Activated CD4-positive, alpha-beta T cell treated with anti-CD3 and anti-CD28 coated beads, Interleukin-2, amount 10 ng/mL, durations not matched to agents 24 days and 14 days (primary cell): ENCODE measurements at regions of chr20 and their contacts with region 1.

Region 1: GRCh38 chr20:25310268-25310920 is 62.5 kb downstream of the PYGB start:
- DNase-seq: peak; percentile 88
- H3K4me3 Mint-ChIP-seq: peak overlapping the region; percentile 85
- H3K27ac Mint-ChIP-seq: peak overlapping the region; percentile 98
- H3K4me1 Mint-ChIP-seq: peaks cover 31% of the 10 kb centered on the region
- H3K27me3 Mint-ChIP-seq: no peaks in the 10 kb centered on the region

Region 2: DNA sequence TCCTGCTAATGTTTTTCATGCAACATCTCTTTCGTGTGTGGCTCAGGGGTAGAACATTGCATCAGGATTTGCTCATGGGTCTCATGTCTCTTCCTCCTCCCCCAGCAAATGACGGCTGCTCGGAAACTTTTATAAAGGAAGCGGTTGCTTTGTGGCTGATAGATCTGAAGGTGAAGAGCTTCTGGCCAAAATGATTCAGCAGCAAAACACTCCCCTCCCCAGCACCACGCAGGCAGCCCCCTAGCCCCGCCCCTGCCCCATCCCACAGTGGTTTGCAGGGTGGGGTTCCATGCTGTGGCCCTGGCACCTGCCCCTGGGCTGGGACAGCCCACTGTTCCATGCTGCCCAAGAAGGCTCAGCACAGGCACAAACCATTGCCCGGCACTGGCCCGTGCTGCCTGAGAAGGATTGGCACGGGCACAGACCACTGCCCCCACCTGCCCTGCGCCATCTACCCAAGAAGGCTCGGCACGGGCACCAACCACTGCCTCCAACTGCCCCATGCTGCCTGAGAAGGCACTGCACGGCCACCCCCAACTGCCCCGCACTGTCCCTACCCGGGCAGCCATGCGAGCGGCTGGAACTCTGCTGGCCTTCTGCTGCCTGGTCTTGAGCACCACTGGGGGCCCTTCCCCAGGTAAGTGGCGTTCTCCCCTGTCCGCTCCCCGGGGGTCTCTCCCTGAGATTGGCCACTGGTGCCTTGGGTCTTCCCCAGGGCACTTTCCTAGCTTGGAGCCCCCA is 361.3 kb before region 1 on chr20 and contains the start of gene CST7:
- intact Hi-C with region 1: loop called (anchors 5 kb)
- DNase-seq: peak; percentile 95
- H3K4me3 Mint-ChIP-seq: peak within 1 kb of the TSS; percentile 95
- H3K27ac Mint-ChIP-seq: peak within 1 kb of the TSS; percentile 98
- H3K4me1 Mint-ChIP-seq: peaks cover 67% of the 10 kb centered on the region
- H3K27me3 Mint-ChIP-seq: no peaks in the 10 kb centered on the region
- total RNA-seq, gene CST7: 115 and 117 TPM in 2 replicates

Region 3: GRCh38 chr20:25044660-25045342 is 265.6 kb before region 1 on chr20:
- intact Hi-C with region 1: no loop called
- DNase-seq: no peak
- H3K4me3 Mint-ChIP-seq: no peak overlapping the region
- H3K27ac Mint-ChIP-seq: no peak overlapping the region
- H3K4me1 Mint-ChIP-seq: peaks cover 10% of the 10 kb centered on the region
- H3K27me3 Mint-ChIP-seq: no peaks in the 10 kb centered on the region

Region 4: DNA sequence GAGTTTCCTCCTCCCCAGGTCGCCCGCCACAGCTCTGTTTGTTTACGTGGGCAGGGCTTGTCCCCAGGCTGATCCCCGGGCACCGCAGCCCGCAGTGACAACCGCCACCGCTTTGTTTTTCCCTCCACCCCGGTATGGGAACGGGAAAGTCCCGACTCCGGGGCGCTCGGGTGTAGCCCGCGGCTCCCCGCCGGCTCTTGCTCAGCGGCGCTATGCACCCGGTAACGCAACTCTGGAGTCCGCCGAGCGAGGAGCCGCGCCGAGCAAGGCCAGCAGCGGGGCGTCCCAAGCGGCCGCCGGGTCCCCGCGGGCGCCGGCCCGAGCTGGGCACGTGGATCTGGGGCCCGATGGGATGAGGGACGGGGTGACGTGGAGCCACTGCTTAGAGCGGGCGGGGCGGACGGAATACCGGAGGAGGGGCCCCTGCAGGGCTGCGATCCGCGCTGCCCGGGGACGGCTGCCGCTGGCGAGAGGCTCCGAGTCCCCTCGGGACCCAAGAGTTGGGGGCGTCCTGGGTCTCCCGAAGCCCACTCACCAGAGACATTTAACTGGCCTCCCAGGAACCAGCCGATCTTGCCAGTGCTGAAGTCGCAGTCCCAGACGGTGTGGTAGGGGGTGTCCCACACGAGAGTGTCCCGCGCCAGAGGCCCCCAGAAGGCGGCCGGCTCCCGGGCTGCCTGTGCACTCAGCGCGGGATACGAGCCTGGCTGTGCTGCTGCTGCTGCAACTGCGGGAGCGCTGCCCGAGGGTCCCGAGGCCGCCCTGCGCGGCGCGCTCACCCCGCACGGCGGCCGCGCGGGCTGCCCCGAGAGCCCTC is 253.0 kb before region 1 on chr20:
- intact Hi-C with region 1: loop called (anchors 1 kb)
- DNase-seq: peak; percentile 95
- H3K4me3 Mint-ChIP-seq: peak overlapping the region; percentile 78
- H3K27ac Mint-ChIP-seq: peak overlapping the region; percentile 65
- H3K4me1 Mint-ChIP-seq: peaks cover 39% of the 10 kb centered on the region
- H3K27me3 Mint-ChIP-seq: peaks cover 37% of the 10 kb centered on the region

Region 5: DNA sequence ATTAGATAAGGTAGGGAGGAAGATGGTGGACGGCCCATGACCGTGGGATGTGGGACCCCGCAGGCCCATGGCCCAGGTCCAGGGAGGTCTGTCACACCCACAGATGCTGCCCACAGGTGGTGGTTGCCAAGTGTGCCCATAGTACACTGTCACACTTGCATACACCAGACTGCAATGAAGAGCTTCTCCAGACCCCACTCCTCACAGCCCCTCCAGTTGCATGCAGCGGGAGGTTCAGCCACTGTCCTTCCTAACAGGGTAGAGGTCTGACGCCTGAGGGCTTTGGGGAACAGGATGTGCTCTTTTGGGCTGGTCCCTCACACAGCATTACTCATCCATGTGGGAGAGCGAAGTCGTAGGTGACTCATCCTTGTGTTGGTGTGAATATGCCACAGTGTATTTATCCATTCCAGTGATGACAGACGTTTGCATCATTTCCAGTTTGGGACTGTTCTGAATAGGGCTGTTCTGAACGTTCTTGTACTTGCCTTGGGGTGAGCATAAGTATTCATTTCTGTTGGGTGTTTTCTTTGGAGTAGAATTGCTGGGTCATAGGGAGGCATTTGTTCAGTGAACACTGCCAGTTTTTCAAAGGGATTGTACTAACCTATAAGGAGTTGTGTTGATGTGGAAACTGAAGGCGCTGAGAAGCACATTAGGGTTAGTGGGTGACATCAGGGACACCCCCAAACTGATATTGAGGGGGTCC is 72.6 kb before region 1 on chr20:
- intact Hi-C with region 1: loop called (anchors 1 kb)
- DNase-seq: peak; percentile 81
- H3K4me3 Mint-ChIP-seq: peak overlapping the region; percentile 55
- H3K27ac Mint-ChIP-seq: peak overlapping the region; percentile 91
- H3K4me1 Mint-ChIP-seq: peaks cover 22% of the 10 kb centered on the region
- H3K27me3 Mint-ChIP-seq: peaks cover under 1% of the 10 kb centered on the region

Region 6: DNA sequence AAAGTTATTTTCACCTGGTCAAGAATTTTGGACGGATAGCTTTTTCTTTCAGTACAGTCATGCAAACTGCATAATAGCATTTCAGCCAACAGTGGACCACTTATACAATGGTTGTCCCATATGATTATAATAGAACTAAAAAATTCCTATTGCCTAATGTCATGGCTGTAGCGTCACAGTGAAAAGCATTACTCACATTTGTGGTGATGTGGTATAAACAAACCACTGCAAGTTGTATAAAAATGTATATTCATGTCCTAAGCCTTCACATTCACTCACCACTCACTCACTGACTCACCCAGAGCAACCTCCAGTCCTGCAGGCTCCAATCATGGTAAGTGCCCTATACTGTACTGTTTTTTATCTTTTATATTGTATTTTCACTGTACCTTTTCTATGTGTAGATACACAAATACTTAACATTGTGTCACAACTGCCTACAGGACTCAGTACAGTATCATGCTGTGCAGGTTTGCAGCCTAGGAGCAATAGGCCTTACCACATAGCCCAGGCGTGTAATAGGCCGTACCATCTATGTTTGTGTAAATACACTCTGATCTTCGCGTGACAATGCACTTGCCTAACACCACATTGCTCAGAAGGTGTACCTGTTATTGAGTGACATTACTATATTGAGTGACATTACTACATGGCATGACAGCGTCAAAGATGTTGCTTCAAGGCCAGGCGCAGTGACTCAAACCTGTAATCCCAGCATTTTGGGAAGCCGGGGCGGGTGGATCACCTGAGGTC is 62.4 kb after region 1 on chr20:
- intact Hi-C with region 1: loop called (anchors 1 kb)
- DNase-seq: no peak
- H3K4me3 Mint-ChIP-seq: no peak overlapping the region
- H3K27ac Mint-ChIP-seq: no peak overlapping the region
- H3K4me1 Mint-ChIP-seq: peaks cover 15% of the 10 kb centered on the region
- H3K27me3 Mint-ChIP-seq: no peaks in the 10 kb centered on the region

Region 7: DNA sequence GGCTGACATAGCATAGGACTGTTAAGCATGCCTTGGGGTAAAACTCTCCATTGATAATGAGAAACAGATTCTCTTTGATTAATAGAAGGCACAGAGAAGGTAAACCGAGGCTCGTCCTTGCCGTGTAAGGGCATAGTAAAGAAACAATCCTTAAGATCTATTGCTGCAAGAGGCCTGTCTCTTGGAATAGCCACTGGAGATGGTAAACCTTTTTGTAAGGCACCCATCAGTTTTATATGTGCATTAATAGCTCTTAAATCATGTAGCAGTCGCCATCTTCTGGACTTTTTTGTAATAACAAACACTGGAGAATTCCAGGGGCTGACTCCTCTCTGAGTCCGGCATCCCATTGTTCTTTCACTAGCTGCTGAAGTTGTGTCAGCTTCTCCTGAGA is 88.6 kb after region 1 on chr20:
- intact Hi-C with region 1: loop called (anchors 1 kb)
- DNase-seq: peak; percentile 80
- H3K4me3 Mint-ChIP-seq: no peak overlapping the region
- H3K27ac Mint-ChIP-seq: no peak overlapping the region
- H3K4me1 Mint-ChIP-seq: peaks cover under 1% of the 10 kb centered on the region
- H3K27me3 Mint-ChIP-seq: no peaks in the 10 kb centered on the region

Region 8: DNA sequence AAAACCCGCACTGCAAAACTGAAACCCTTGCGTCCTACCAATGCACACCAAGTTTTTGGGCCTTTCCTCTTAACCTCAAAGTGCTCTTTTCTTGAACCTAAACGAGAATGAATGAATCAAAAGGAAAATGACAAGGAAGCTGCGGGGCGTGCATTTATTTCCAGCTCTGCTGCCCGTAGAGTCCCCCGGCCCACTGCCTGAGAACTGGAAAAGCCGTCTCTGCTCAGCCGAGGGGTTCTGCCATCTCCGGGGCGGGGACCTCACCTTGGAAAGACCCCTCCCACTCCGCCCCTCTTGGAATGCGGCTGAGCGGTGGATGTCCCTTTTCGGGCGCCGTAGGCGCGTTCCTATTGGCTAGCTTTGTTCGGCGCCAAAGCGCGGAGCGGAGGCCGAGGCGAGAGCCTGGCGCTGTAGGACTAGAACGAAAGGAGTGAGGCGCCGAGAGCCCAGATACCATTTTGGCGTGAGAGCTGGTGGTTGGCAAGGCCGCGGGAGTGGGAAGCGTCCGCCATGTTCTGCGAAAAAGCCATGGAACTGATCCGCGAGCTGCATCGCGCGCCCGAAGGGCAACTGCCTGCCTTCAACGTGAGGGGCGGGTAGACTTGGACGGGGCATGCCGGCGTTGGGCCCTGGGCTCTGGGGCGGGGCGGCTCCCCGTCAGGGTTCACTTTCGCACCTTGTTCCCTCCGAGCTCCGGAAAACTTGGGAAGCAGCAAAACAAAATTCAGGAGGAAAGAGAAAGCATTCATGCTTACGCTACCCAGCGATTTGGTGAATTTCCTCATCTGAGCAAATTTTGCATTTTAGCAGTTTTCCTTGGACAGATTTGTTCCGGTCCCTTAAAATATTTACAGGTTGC is 97.1 kb after region 1 on chr20 and contains the start of gene GINS1:
- intact Hi-C with region 1: loop called (anchors 1 kb)
- DNase-seq: peak; percentile 96
- H3K4me3 Mint-ChIP-seq: peak within 1 kb of the TSS; percentile 90
- H3K27ac Mint-ChIP-seq: peak within 1 kb of the TSS; percentile 95
- H3K4me1 Mint-ChIP-seq: peaks cover 19% of the 10 kb centered on the region
- H3K27me3 Mint-ChIP-seq: no peaks in the 10 kb centered on the region
- total RNA-seq, gene GINS1: 43.0 and 43.2 TPM in 2 replicates

Region 9: GRCh38 chr20:25437153-25437581 is 126.8 kb after region 1 on chr20:
- intact Hi-C with region 1: no loop called
- DNase-seq: no peak
- H3K4me3 Mint-ChIP-seq: no peak overlapping the region
- H3K27ac Mint-ChIP-seq: no peak overlapping the region
- H3K4me1 Mint-ChIP-seq: peaks cover 3% of the 10 kb centered on the region
- H3K27me3 Mint-ChIP-seq: no peaks in the 10 kb centered on the region